ENCODE measurements at regions of chr1 and their contacts with region 1.

Region 1: DNA sequence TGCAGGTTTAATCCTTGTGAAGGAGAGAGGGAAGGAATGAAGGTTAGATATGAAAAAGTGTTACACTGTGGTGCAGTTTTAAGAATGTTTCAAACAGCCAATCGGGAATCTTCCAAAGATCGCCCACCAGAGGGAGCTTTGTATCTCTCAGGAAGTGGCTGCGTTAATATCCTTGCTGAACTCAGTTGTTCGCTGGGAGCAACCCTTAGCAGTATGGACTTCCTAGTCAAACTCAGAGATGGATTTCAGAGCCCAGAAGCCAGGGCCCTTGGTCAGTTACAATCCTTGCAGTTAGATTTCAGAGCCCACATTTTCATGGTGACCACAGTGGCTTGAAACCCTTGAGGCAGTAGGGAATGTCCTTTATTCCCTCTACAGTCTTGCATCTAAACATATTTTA is 136.2 kb downstream of the NTNG1 start:
- DNase-seq: peak in 1 of 5 donors; percentile 18
- ATAC-seq: no peak
- H3K4me3 ChIP-seq: no peak overlapping the region
- H3K27ac ChIP-seq: no peak overlapping the region
- H3K4me1 ChIP-seq: no peaks in the 10 kb centered on the region
- H3K27me3 ChIP-seq: no peaks in the 10 kb centered on the region
- CTCF ChIP-seq: peak in 7 of 12 donors; percentile 11 to 45 (median 35)
- POLR2A ChIP-seq: no peak

Region 2: DNA sequence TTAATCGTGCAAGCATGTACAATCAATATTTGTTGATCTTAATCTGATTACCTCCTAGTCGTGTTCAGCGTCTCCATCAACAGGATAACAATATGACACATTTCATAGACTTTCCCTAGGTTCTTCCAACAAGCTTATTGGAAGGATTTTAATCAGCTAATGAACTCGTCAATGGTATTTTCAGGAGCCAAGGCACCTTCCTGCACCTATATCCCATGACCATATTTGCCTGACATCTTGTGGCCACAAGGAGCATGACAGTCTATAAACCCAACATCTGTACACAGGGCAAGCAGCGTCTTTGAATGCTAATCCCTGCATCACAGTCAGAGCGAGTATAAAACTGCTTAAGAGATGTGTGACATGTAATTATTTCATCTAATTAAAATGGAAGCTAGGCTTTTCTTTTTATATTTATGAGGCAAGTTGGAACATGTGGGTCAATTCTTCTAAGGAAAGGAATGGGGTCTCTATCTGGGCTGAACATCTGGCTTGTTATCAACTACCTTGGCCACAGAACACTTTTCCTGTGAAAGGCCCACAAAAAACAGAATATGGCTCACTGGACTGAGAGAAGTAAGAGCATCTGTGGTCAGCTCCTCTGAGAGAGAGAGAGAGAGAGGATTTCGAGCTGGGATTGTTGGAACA is 252.6 kb after region 1 on chr1:
- intact Hi-C with region 1: loop called in 2 of 10 experiments (anchors 5 to 10 kb)
- DNase-seq: no peak
- ATAC-seq: peak in 1 of 4 donors; percentile 49
- H3K4me3 ChIP-seq: no peak overlapping the region
- H3K27ac ChIP-seq: no peak overlapping the region
- H3K4me1 ChIP-seq: peaks cover 0 to under 1% (median 0%) of the 10 kb centered on the region in 12 donors
- H3K27me3 ChIP-seq: no peaks in the 10 kb centered on the region
- CTCF ChIP-seq: peak; percentile 21 to 66 (median 51)
- POLR2A ChIP-seq: no peak